B cell (primary cell): ENCODE measurements at regions of chr13 and their contacts with region 1.

Region 1: GRCh38 chr13:27147530-27148170 is 24.0 kb downstream of the USP12 start:
- DNase-seq: peak; percentile 74
- ATAC-seq: peak; percentile 90
- H3K4me3 ChIP-seq: no peak overlapping the region
- H3K4me3 Mint-ChIP-seq: peak overlapping the region; percentile 67
- H3K27ac ChIP-seq: peak overlapping the region; percentile 70 to 72
- H3K27ac Mint-ChIP-seq: peak overlapping the region; percentile 94
- H3K4me1 ChIP-seq: peaks cover 36 to 51% of the 10 kb centered on the region in 2 donors
- H3K4me1 Mint-ChIP-seq: peaks cover 74% of the 10 kb centered on the region
- H3K27me3 ChIP-seq: no peaks in the 10 kb centered on the region
- H3K27me3 Mint-ChIP-seq: no peaks in the 10 kb centered on the region
- CTCF ChIP-seq: no peak

Region 2: GRCh38 chr13:27112006-27112405 is 35.6 kb before region 1 on chr13:
- CTCF ChIA-PET with region 1: no interaction called
- POLR2A ChIA-PET with region 1: interaction called, 4 read pairs
- intact Hi-C with region 1: loop called (anchors 5 kb)
- DNase-seq: no peak
- ATAC-seq: no peak
- H3K4me3 ChIP-seq: no peak overlapping the region
- H3K4me3 Mint-ChIP-seq: no peak overlapping the region
- H3K27ac ChIP-seq: no peak overlapping the region
- H3K27ac Mint-ChIP-seq: no peak overlapping the region
- H3K4me1 ChIP-seq: peaks cover 9 to 21% of the 10 kb centered on the region in 2 donors
- H3K4me1 Mint-ChIP-seq: peaks cover 42% of the 10 kb centered on the region
- H3K27me3 ChIP-seq: no peaks in the 10 kb centered on the region
- H3K27me3 Mint-ChIP-seq: no peaks in the 10 kb centered on the region
- CTCF ChIP-seq: no peak

Region 3: DNA sequence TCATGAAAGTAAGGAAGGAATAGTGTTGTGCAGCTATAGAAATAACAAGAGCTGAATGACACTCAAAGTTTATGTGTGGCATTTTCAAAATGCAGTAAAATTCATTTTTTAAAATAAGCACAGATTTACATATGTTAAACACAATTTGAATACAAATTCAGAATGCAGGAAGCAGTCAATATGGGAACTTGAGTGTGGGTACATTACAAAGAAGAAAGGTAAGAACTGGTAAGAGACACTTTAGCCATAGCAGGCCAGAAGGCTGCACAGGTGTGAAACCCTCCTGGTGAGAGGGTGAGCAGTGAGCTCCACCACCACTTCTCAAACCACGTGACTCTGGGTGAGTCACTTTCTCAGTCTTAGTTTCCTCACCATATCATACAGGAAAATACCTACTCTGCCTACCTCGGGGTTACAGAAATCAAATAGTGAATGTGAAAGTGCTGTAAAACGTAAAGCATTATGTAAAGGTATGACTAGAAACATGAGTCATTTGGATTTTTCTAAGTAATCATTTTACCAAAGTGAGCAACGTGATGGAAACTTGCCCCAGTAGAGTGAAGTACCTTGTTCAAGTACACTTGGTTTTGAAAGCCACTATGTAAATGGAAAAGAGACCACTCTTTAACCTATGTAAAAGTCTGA is 16.5 kb before region 1 on chr13:
- CTCF ChIA-PET with region 1: interaction called, 4 read pairs
- POLR2A ChIA-PET with region 1: interaction called, 5 read pairs
- intact Hi-C with region 1: loop called (anchors 2 kb)
- DNase-seq: peak; percentile 56
- ATAC-seq: peak; percentile 84
- H3K4me3 ChIP-seq: no peak overlapping the region
- H3K4me3 Mint-ChIP-seq: peak overlapping the region; percentile 33
- H3K27ac ChIP-seq: peak overlapping the region in 1 of 2 donors; percentile 2
- H3K27ac Mint-ChIP-seq: peak overlapping the region; percentile 80
- H3K4me1 ChIP-seq: peaks cover 38 to 40% of the 10 kb centered on the region in 2 donors
- H3K4me1 Mint-ChIP-seq: peaks cover 80% of the 10 kb centered on the region
- H3K27me3 ChIP-seq: no peaks in the 10 kb centered on the region
- H3K27me3 Mint-ChIP-seq: no peaks in the 10 kb centered on the region
- CTCF ChIP-seq: no peak

Region 4: DNA sequence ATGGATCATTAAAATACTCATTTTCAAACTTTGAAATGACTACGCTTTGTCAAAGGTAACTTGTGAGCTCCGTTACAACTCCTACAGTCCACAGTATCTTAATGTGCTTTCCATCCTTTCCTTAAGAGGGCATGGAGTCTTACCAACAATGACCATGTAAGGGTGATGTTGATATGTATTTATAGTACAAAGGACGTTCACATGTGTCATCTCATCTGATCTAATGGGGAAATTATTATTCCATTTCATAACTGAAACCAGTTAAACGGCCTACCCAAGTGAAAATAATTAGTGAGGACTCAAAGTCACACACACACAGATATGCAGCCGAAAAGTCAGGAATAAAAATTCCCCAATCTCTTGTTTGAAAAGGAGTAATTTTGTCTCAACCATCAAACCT is 14.3 kb after region 1 on chr13:
- CTCF ChIA-PET with region 1: interaction called, 3 read pairs
- POLR2A ChIA-PET with region 1: interaction called, 9 read pairs
- intact Hi-C with region 1: loop called (anchors 2 kb)
- DNase-seq: no peak
- ATAC-seq: no peak
- H3K4me3 ChIP-seq: no peak overlapping the region
- H3K4me3 Mint-ChIP-seq: peak overlapping the region; percentile 55
- H3K27ac ChIP-seq: no peak overlapping the region
- H3K27ac Mint-ChIP-seq: no peak overlapping the region
- H3K4me1 ChIP-seq: peaks cover 8 to 31% of the 10 kb centered on the region in 2 donors
- H3K4me1 Mint-ChIP-seq: peaks cover 77% of the 10 kb centered on the region
- H3K27me3 ChIP-seq: no peaks in the 10 kb centered on the region
- H3K27me3 Mint-ChIP-seq: no peaks in the 10 kb centered on the region
- CTCF ChIP-seq: no peak

Region 5: GRCh38 chr13:27219611-27220010 is 72.0 kb after region 1 on chr13:
- CTCF ChIA-PET with region 1: no interaction called
- POLR2A ChIA-PET with region 1: no interaction called
- intact Hi-C with region 1: no loop called
- DNase-seq: no peak
- ATAC-seq: no peak
- H3K4me3 ChIP-seq: no peak overlapping the region
- H3K4me3 Mint-ChIP-seq: no peak overlapping the region
- H3K27ac ChIP-seq: no peak overlapping the region
- H3K27ac Mint-ChIP-seq: no peak overlapping the region
- H3K4me1 ChIP-seq: peaks cover 15 to 20% of the 10 kb centered on the region in 2 donors
- H3K4me1 Mint-ChIP-seq: peaks cover 35% of the 10 kb centered on the region
- H3K27me3 ChIP-seq: no peaks in the 10 kb centered on the region
- H3K27me3 Mint-ChIP-seq: no peaks in the 10 kb centered on the region
- CTCF ChIP-seq: no peak